Body of pancreas (tissue), 4 donors: ENCODE measurements at regions of chr2 and their contacts with region 1.

Region 1: GRCh38 chr2:182650704-182651103 is 65.4 kb upstream of the DNAJC10 start:
- DNase-seq: no peak
- ATAC-seq: peak; percentile 47
- H3K4me3 ChIP-seq: no peak overlapping the region
- H3K27ac ChIP-seq: no peak overlapping the region
- H3K4me1 ChIP-seq: peaks cover 7% of the 10 kb centered on the region
- H3K27me3 ChIP-seq: no peaks in the 10 kb centered on the region
- CTCF ChIP-seq: peak; percentile 19 to 82 (median 64)
- POLR2A ChIP-seq: no peak

Region 2: DNA sequence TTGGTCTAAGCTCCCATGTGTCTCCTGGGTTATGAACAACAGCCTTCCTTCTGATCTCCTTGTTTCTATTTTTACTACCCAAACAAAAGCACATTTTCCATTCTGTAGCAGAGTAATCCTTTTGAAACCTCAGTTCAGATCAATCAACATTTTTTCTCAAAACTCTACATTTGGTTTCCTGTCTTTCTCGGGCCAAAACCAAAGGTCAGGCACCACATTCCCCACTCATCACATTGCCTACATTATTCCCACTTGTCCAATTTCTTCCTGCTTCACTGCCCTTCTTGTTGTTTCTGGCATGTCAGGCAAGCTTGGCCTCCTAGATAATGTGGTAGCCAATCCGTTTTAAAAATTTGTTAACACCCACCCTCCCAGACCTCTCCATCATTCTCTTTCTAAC is 468.3 kb before region 1 on chr2:
- intact Hi-C with region 1: loop called (anchors 5 kb)
- DNase-seq: no peak
- ATAC-seq: no peak
- H3K4me3 ChIP-seq: no peak overlapping the region
- H3K27ac ChIP-seq: no peak overlapping the region
- H3K4me1 ChIP-seq: no peaks in the 10 kb centered on the region
- H3K27me3 ChIP-seq: no peaks in the 10 kb centered on the region
- CTCF ChIP-seq: no peak
- POLR2A ChIP-seq: no peak

Region 3: GRCh38 chr2:182240862-182241371 is 409.8 kb before region 1 on chr2:
- intact Hi-C with region 1: loop called (anchors 10 kb)
- DNase-seq: peak; percentile 59 to 72 (median 66)
- ATAC-seq: peak; percentile 94
- H3K4me3 ChIP-seq: no peak overlapping the region
- H3K27ac ChIP-seq: no peak overlapping the region
- H3K4me1 ChIP-seq: peaks cover 8% of the 10 kb centered on the region
- H3K27me3 ChIP-seq: no peaks in the 10 kb centered on the region
- CTCF ChIP-seq: peak in 6 of 7 experiments; percentile 38 to 62 (median 54)
- POLR2A ChIP-seq: no peak

Region 4: GRCh38 chr2:182553483-182553882 is 97.2 kb before region 1 on chr2:
- intact Hi-C with region 1: no loop called
- DNase-seq: no peak
- ATAC-seq: no peak
- H3K4me3 ChIP-seq: no peak overlapping the region
- H3K27ac ChIP-seq: no peak overlapping the region
- H3K4me1 ChIP-seq: no peaks in the 10 kb centered on the region
- H3K27me3 ChIP-seq: no peaks in the 10 kb centered on the region
- CTCF ChIP-seq: no peak
- POLR2A ChIP-seq: no peak